WTC11 (cell line): ENCODE measurements at regions of chr3 and their contacts with region 1.

Region 1: GRCh38 chr3:48989796-48990635 is at the start of gene P4HTM:
- DNase-seq: peak; percentile 84
- ATAC-seq: peak; percentile 74
- H3K4me3 Mint-ChIP-seq: peak within 1 kb of the TSS; percentile 89
- H3K27ac Mint-ChIP-seq: peak within 1 kb of the TSS; percentile 92
- H3K4me1 Mint-ChIP-seq: peaks cover 23% of the 10 kb centered on the region
- H3K27me3 Mint-ChIP-seq: no peaks in the 10 kb centered on the region
- CTCF ChIP-seq: no peak
- total RNA-seq, gene P4HTM: 21.9 to 28.8 TPM (median 28.2 TPM) in 3 replicates

Region 2: DNA sequence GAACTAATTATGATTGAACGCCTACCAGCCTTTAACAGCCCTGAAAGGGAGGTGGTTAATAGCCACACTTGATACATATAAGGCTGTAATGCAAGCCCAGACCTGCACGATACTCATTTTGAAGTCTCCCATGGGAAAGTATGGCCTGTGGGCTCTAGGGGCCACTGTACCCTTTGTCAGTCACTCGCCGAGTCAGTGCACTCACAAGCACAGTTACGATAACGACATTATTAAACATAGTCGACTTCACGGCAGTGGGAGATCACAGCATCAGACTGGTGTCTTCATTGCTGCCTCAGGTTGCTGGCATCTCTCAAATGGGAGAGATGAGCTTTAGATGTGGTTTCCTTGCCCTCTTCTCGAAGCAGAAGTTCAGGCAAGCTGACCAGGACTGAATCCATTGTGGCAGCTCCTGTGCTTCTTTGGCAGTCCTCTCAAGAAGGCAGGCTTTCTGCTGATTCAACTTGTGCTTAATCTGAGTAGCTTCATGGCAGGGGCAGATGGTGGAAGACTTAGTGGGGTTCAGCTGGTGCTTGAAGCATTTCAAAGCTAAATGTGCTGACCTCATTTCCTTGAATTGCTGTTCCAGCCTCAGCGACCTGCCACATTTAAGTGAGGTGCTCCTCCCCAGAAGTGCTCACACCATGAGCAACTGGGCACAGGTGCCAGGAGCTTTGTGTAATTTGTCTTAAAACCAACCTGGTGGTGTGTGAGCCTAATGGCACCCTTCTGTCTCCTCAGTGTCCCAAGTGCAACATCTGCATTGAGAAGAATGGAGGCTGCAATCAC is 15.7 kb before region 1 on chr3:
- CTCF ChIA-PET with region 1: interaction called, 13 read pairs
- POLR2A ChIA-PET with region 1: no interaction called
- DNase-seq: no peak
- ATAC-seq: no peak
- H3K4me3 Mint-ChIP-seq: no peak overlapping the region
- H3K27ac Mint-ChIP-seq: no peak overlapping the region
- H3K4me1 Mint-ChIP-seq: no peaks in the 10 kb centered on the region
- H3K27me3 Mint-ChIP-seq: no peaks in the 10 kb centered on the region
- CTCF ChIP-seq: no peak

Region 3: DNA sequence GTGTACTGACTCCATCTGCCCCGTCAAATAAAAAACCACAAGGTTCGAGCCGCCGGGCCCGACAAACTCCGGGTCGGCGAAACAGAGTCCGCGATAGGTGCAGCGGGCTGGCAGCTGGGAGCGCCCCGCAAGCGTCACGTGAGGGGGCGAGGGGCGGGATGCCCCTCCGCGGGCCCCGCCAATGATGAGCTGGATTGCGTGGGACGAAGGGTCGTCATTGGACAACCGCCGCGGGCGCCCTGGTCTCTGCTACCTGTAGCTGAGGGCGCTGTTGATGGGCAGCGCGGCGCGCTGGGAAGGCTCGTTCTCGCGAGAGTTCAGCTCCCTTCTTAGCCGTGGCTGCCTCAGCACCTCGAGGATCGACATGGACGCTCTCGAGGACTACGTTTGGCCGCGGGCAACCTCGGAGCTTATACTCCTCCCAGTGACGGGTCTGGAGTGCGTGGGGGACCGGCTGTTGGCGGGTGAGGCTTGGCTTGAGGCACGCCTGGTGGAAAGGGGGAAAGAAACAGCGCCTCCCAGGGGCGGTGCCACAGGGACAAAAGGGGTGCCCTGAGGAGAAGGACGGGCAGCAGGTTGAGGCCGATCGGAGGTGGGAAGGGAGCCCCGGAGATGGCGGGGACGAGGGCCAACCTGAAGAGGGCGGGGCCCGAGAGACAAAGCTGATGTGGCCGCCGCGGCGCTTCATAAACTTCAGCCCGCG is 17.2 kb after region 1 on chr3 and contains the start of gene WDR6:
- CTCF ChIA-PET with region 1: interaction called, 107 read pairs
- POLR2A ChIA-PET with region 1: interaction called, 61 read pairs
- DNase-seq: peak; percentile 97
- ATAC-seq: peak; percentile 90
- H3K4me3 Mint-ChIP-seq: peak within 1 kb of the TSS; percentile 99
- H3K27ac Mint-ChIP-seq: peak within 1 kb of the TSS; percentile 100
- H3K4me1 Mint-ChIP-seq: peaks cover 15% of the 10 kb centered on the region
- H3K27me3 Mint-ChIP-seq: no peaks in the 10 kb centered on the region
- CTCF ChIP-seq: 0 out of 2 replicates have a peak, but pooled peaks have one; percentile 37
- total RNA-seq, gene WDR6: 204 to 213 TPM (median 209 TPM) in 3 replicates

Region 4: DNA sequence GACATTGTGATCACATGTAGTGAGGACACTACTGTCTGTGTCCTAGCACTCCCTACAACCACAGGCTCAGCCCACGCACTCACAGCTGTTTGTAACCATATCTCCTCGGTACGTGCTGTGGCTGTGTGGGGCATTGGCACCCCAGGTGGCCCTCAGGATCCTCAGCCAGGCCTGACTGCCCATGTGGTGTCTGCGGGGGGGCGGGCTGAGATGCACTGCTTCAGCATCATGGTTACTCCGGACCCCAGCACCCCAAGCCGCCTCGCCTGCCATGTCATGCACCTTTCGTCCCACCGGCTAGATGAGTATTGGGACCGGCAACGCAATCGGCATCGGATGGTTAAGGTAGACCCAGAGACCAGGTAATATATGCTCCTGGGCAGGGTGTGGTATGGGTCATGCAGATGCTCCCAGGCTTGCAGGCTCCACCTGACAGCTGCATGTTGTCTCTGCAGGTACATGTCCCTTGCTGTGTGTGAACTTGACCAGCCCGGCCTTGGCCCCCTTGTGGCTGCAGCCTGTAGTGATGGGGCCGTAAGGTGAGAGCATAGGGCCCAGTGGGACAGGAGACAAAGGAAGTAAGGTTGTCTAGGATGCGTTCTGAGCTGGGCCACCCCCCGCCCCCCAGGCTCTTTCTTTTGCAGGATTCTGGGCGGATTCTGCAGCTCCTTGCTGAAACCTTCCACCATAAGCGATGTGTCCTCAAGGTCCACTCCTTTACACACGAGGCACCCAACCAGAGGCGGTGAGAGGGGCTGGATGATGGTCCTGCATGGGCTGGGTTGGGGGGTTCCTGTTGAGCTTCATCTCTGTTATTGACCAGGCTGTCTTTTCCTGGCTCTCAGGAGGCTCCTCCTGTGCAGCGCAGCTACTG is 24.0 kb after region 1 on chr3:
- CTCF ChIA-PET with region 1: interaction called, 107 read pairs
- POLR2A ChIA-PET with region 1: interaction called, 10 read pairs
- DNase-seq: peak; percentile 85
- ATAC-seq: peak; percentile 72
- H3K4me3 Mint-ChIP-seq: no peak overlapping the region
- H3K27ac Mint-ChIP-seq: no peak overlapping the region
- H3K4me1 Mint-ChIP-seq: peaks cover 11% of the 10 kb centered on the region
- H3K27me3 Mint-ChIP-seq: no peaks in the 10 kb centered on the region
- CTCF ChIP-seq: peak; percentile 78

Region 5: GRCh38 chr3:49021813-49022687 is 32.0 kb after region 1 on chr3 and contains the start of gene NDUFAF3:
- CTCF ChIA-PET with region 1: interaction called, 101 read pairs
- POLR2A ChIA-PET with region 1: interaction called, 37 read pairs
- DNase-seq: peak; percentile 97
- ATAC-seq: peak; percentile 71
- H3K4me3 Mint-ChIP-seq: peak within 1 kb of the TSS; percentile 92
- H3K27ac Mint-ChIP-seq: peak within 1 kb of the TSS; percentile 98
- H3K4me1 Mint-ChIP-seq: peaks cover 29% of the 10 kb centered on the region
- H3K27me3 Mint-ChIP-seq: no peaks in the 10 kb centered on the region
- CTCF ChIP-seq: peak; percentile 88
- total RNA-seq, gene NDUFAF3: 36.8 to 50.3 TPM (median 49.6 TPM) in 3 replicates

Region 6: GRCh38 chr3:49298511-49298910 is 308.5 kb after region 1 on chr3:
- CTCF ChIA-PET with region 1: no interaction called
- POLR2A ChIA-PET with region 1: no interaction called
- DNase-seq: no peak
- ATAC-seq: no peak
- H3K4me3 Mint-ChIP-seq: no peak overlapping the region
- H3K27ac Mint-ChIP-seq: no peak overlapping the region
- H3K4me1 Mint-ChIP-seq: no peaks in the 10 kb centered on the region
- H3K27me3 Mint-ChIP-seq: no peaks in the 10 kb centered on the region
- CTCF ChIP-seq: no peak